Naive thymus-derived CD4-positive, alpha-beta T cell (primary cell): ENCODE measurements at regions of chr14 and their contacts with region 1.

Region 1: GRCh38 chr14:73503648-73504047 is 12.9 kb downstream of the RIOX1 start:
- DNase-seq: no peak
- ATAC-seq: peak; percentile 41
- H3K4me3 ChIP-seq: no peak overlapping the region
- H3K4me3 Mint-ChIP-seq: no peak overlapping the region
- H3K27ac ChIP-seq: no peak overlapping the region
- H3K27ac Mint-ChIP-seq: no peak overlapping the region
- H3K4me1 ChIP-seq: no peaks in the 10 kb centered on the region
- H3K4me1 Mint-ChIP-seq: peaks cover 0 to 5% (median 0%) of the 10 kb centered on the region in 7 donors
- H3K27me3 ChIP-seq: no peaks in the 10 kb centered on the region
- H3K27me3 Mint-ChIP-seq: no peaks in the 10 kb centered on the region

Region 2: DNA sequence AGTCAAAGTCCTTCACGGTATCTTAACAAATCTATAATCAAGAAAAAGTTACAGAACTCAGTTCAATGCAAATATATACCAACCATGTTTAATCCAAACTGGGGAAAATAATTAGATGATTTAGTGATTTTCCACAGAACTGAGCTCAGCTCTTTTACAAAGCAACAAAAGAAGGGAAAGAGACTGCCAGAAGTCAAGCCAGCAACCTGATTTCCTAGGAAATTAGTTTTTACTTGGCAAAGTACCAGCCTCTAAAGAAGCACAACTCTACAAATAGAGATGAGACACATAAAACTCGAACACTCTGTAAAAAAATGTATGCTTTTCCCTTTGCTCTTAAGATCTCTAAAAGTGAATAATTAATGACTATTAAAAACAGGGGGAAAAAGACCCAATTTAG is 64.7 kb before region 1 on chr14:
- CTCF ChIA-PET with region 1: no interaction called
- POLR2A ChIA-PET with region 1: no interaction called
- intact Hi-C with region 1: no loop called
- DNase-seq: no peak
- ATAC-seq: no peak
- H3K4me3 ChIP-seq: no peak overlapping the region
- H3K4me3 Mint-ChIP-seq: no peak overlapping the region
- H3K27ac ChIP-seq: no peak overlapping the region
- H3K27ac Mint-ChIP-seq: no peak overlapping the region
- H3K4me1 ChIP-seq: no peaks in the 10 kb centered on the region
- H3K4me1 Mint-ChIP-seq: peaks cover 0 to 40% (median 29%) of the 10 kb centered on the region in 7 donors
- H3K27me3 ChIP-seq: no peaks in the 10 kb centered on the region
- H3K27me3 Mint-ChIP-seq: no peaks in the 10 kb centered on the region

Region 3: GRCh38 chr14:73865536-73866113 is 362.0 kb after region 1 on chr14:
- CTCF ChIA-PET with region 1: no interaction called
- POLR2A ChIA-PET with region 1: no interaction called
- intact Hi-C with region 1: loop called in 1 of 2 experiments (anchors 5 kb)
- DNase-seq: no peak
- ATAC-seq: no peak
- H3K4me3 ChIP-seq: no peak overlapping the region
- H3K4me3 Mint-ChIP-seq: no peak overlapping the region
- H3K27ac ChIP-seq: no peak overlapping the region
- H3K27ac Mint-ChIP-seq: no peak overlapping the region
- H3K4me1 ChIP-seq: no peaks in the 10 kb centered on the region
- H3K4me1 Mint-ChIP-seq: peaks cover 0 to 12% (median 0%) of the 10 kb centered on the region in 7 donors
- H3K27me3 ChIP-seq: no peaks in the 10 kb centered on the region
- H3K27me3 Mint-ChIP-seq: no peaks in the 10 kb centered on the region

Region 4: DNA sequence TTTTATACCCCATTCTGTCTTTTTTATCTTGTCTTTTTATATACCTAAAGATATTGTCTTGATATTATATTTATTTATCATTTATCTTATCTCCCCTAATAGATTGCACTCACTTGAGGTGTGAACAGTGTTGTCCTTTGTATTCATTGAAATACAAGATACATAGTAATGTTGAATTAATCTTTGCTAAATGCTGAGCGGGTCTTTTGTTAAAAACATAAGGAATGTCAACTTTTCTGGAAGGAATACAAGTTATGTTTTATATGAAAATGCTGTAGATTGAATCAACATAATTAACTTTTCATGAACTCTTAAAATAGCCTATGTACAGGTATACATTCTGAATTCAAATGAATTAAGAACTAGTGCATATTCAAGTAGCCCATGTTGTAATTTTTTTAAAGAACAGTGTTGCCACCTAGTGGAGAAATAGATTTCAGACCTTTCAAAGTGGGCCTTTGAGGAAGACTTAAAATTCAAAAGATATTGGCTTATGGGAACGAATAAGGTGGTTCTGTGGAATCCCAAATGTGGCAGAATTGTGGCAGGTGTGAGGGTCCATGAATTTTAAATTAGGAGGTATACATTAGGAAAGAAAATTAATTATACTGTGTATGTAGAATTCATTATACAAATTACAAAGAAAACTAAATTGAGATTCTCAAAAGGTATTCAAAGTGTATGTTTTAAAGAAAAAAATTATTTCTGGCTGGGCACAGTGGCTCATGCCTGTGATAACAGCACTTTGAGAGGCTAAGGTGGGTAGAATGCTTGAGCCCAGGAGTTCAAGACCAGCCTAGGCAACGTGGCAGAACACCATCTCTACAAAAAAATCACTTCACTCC is 534.6 kb after region 1 on chr14:
- CTCF ChIA-PET with region 1: no interaction called
- POLR2A ChIA-PET with region 1: no interaction called
- intact Hi-C with region 1: loop called in 1 of 2 experiments (anchors 2 kb)
- DNase-seq: peak in 7 of 9 donors; percentile 19 to 63 (median 49)
- ATAC-seq: peak; percentile 65
- H3K4me3 ChIP-seq: no peak overlapping the region
- H3K4me3 Mint-ChIP-seq: no peak overlapping the region
- H3K27ac ChIP-seq: no peak overlapping the region
- H3K27ac Mint-ChIP-seq: peak overlapping the region in 1 of 9 donors; percentile 29
- H3K4me1 ChIP-seq: no peaks in the 10 kb centered on the region
- H3K4me1 Mint-ChIP-seq: no peaks in the 10 kb centered on the region
- H3K27me3 ChIP-seq: no peaks in the 10 kb centered on the region
- H3K27me3 Mint-ChIP-seq: no peaks in the 10 kb centered on the region